ENCODE measurements at regions of chr13 and their contacts with region 1.

Region 1: GRCh38 chr13:114339857-114340534 is 25.7 kb downstream of the CHAMP1 start:
- DNase-seq: peak in 1 of 2 experiments; percentile 32
- H3K4me3 ChIP-seq: no peak overlapping the region
- H3K4me3 Mint-ChIP-seq: no peak overlapping the region
- H3K27ac Mint-ChIP-seq: no peak overlapping the region
- H3K4me1 ChIP-seq: no peaks in the 10 kb centered on the region
- H3K4me1 Mint-ChIP-seq: no peaks in the 10 kb centered on the region
- H3K27me3 ChIP-seq: no peaks in the 10 kb centered on the region
- H3K27me3 Mint-ChIP-seq: peaks cover 4% of the 10 kb centered on the region
- CTCF ChIP-seq: peak; percentile 66 to 72

Region 2: GRCh38 chr13:114268344-114269280 is 71.4 kb before region 1 on chr13:
- CTCF ChIA-PET with region 1: no interaction called
- POLR2A ChIA-PET with region 1: interaction called, 12 read pairs
- intact Hi-C with region 1: no loop called
- DNase-seq: no peak
- H3K4me3 ChIP-seq: no peak overlapping the region
- H3K4me3 Mint-ChIP-seq: no peak overlapping the region
- H3K27ac Mint-ChIP-seq: no peak overlapping the region
- H3K4me1 ChIP-seq: no peaks in the 10 kb centered on the region
- H3K4me1 Mint-ChIP-seq: no peaks in the 10 kb centered on the region
- H3K27me3 ChIP-seq: no peaks in the 10 kb centered on the region
- H3K27me3 Mint-ChIP-seq: no peaks in the 10 kb centered on the region
- CTCF ChIP-seq: no peak

Measured in Caco-2 (cell line).